ENCODE measurements at regions of chr18 and their contacts with region 1.

Region 1: DNA sequence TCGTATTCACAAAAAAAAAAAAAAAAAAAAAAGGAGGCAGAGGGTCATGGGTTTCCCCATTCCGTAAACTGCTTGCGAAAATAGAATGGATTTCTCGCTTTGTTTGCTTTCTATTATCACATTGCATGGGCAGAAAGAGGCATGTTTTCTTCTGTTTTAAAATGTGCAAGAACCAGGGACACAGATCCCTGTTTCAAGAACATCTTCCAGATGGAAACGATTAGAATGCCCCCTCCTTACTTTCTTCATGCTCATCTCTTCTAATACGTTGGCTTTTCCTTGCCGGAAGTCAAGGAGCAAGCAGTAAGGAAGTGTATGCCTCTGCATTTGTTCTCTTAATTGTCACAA is 51.0 kb upstream of the ZNF516 start:
- DNase-seq: peak; percentile 42 to 63 (median 51)
- H3K4me3 ChIP-seq: peak overlapping the region; percentile 27 to 73 (median 36)
- H3K4me3 Mint-ChIP-seq: peak overlapping the region; percentile 40 to 87
- H3K27ac ChIP-seq: peak overlapping the region; percentile 90 to 94
- H3K27ac Mint-ChIP-seq: peak overlapping the region; percentile 95 to 98 (median 97)
- H3K4me1 ChIP-seq: peaks cover 56 to 60% of the 10 kb centered on the region in 2 donors
- H3K4me1 Mint-ChIP-seq: peaks cover 56% of the 10 kb centered on the region
- H3K27me3 ChIP-seq: no peaks in the 10 kb centered on the region
- H3K27me3 Mint-ChIP-seq: no peaks in the 10 kb centered on the region
- CTCF ChIP-seq: no peak

Region 2: DNA sequence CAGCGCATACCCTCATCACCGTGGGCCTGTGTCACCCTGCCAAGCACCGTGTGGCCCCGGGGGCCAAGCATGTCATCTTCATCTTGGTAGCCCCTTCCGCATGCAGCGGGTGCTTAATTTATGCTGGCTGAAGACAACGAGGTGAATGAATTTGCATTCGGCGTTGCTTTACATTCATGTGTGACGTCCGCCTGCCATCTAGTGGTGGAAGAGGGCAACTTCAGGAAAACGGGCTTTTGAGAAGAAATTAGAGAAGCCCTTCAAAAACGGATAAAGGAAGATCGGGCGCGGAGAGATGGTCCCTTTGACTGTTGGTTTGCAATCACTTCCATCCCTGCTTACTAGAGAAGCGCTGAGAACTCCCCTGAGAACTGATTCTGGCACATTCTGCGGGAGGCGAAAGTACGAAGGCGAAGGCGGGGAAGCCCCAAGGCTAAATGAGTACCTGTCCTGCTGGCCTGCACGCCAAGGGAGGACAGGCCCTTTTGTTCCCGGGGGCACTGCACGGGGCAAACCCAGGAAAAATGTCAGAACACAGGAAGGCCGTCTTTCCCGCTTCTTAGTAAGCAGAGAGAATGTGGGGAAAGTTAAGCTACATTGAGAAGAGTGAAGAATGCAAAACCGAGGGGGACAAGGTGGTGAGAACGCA is 196.9 kb before region 1 on chr18:
- intact Hi-C with region 1: no loop called
- DNase-seq: peak; percentile 35 to 50 (median 39)
- H3K4me3 ChIP-seq: no peak overlapping the region
- H3K4me3 Mint-ChIP-seq: no peak overlapping the region
- H3K27ac ChIP-seq: no peak overlapping the region
- H3K27ac Mint-ChIP-seq: peak overlapping the region in 1 of 7 donors; percentile 31
- H3K4me1 ChIP-seq: no peaks in the 10 kb centered on the region
- H3K4me1 Mint-ChIP-seq: peaks cover 6% of the 10 kb centered on the region
- H3K27me3 ChIP-seq: no peaks in the 10 kb centered on the region
- H3K27me3 Mint-ChIP-seq: peaks cover 0 to 3% (median 2%) of the 10 kb centered on the region in 3 donors
- CTCF ChIP-seq: peak; percentile 86

Region 3: GRCh38 chr18:76505614-76506013 is 40.4 kb before region 1 on chr18:
- intact Hi-C with region 1: loop called in 1 of 2 experiments (anchors 5 kb)
- DNase-seq: peak in 2 of 3 donors; percentile 68 to 71
- H3K4me3 ChIP-seq: peak overlapping the region in 1 of 3 experiments; percentile 17
- H3K4me3 Mint-ChIP-seq: peak overlapping the region in 1 of 2 donors; percentile 15
- H3K27ac ChIP-seq: peak overlapping the region in 1 of 2 donors; percentile 79
- H3K27ac Mint-ChIP-seq: peak overlapping the region; percentile 22 to 84 (median 76)
- H3K4me1 ChIP-seq: peaks cover 69 to 74% of the 10 kb centered on the region in 2 donors
- H3K4me1 Mint-ChIP-seq: peaks cover 64% of the 10 kb centered on the region
- H3K27me3 ChIP-seq: no peaks in the 10 kb centered on the region
- H3K27me3 Mint-ChIP-seq: peaks cover 0 to 4% (median 0%) of the 10 kb centered on the region in 3 donors
- CTCF ChIP-seq: no peak

Region 4: GRCh38 chr18:76592981-76593381 is 46.9 kb after region 1 on chr18:
- intact Hi-C with region 1: loop called in 1 of 2 experiments (anchors 10 kb)
- DNase-seq: no peak
- H3K4me3 ChIP-seq: no peak overlapping the region
- H3K4me3 Mint-ChIP-seq: no peak overlapping the region
- H3K27ac ChIP-seq: no peak overlapping the region
- H3K27ac Mint-ChIP-seq: no peak overlapping the region
- H3K4me1 ChIP-seq: peaks cover 25 to 31% of the 10 kb centered on the region in 2 donors
- H3K4me1 Mint-ChIP-seq: peaks cover 34% of the 10 kb centered on the region
- H3K27me3 ChIP-seq: no peaks in the 10 kb centered on the region
- H3K27me3 Mint-ChIP-seq: peaks cover 0 to 4% (median 4%) of the 10 kb centered on the region in 3 donors
- CTCF ChIP-seq: no peak

Measured in CD14-positive monocyte (primary cell).